ENCODE measurements at regions of chr5 and their contacts with region 1.

Region 1: DNA sequence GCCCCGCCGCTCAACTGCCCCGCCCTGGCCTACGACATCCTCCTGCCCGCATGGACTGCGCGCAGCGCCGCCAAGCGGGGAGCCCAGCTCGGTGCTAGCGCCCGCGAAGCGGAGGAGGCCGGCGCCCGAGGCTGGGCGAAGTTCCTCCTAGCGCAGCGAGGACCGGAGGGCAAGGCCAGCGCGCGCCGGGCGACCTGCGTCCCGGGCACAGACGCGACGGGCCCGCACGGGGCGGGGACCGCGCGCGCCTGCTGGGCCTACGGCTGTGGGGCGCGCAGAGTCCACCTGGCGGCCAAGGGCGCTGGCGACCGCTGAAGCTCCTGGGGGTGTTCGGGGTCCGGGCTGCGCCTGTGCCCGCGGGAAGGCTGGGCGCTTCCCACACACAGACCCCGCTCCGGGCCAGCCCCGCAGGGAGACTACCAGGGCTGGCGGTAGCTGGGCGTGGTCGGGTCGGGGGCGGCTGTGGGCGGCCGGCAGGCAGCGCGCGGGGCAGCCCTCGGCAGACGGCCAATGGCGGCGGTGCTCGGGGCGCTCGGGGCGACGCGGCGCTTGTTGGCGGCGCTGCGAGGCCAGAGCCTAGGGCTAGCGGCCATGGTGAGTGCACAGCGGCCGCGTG is at the start of gene PCBD2:
- DNase-seq: peak; percentile 90

Region 2: DNA sequence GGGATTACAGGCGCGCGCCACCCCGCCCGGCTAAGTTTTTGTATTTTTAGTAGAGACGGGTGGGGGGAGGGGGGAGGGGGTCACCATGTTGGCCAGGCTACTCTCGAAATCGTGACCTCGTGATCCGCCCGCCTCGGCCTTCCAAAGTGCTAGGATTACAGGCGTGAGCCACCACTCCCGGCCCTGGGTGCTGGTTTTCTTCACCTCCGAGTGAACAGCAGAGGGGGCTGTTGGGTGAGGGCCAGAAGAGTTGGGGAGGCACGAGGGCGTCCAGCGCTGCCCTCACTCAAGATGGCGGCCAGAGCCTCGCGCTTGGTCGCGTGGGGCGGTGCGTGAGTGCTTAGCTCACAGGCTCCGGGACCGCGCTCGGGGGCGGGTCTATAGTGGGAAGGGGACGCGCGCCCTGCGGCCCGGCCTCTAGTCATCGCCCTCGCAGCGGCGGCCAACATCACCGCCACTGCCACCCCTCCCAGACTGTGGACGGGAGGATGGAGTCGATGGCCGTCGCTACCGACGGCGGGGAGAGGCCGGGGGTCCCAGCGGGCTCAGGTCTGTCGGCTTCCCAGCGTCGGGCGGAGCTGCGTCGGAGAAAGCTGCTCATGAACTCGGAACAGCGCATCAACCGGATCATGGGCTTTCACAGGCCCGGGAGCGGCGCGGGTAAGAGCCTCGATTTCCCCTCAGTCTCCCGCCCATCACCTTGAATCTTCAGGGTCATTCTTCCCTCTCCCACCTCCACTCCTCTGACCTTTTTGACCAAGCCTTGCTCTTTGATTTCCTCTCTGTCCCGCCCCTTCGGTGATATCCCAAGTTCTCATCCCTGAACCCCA is 166.4 kb before region 1 on chr5 and contains the start of gene CAMLG:
- CTCF ChIA-PET with region 1: interaction called, 3 read pairs
- POLR2A ChIA-PET with region 1: interaction called, 13 read pairs
- DNase-seq: peak; percentile 93

Region 3: DNA sequence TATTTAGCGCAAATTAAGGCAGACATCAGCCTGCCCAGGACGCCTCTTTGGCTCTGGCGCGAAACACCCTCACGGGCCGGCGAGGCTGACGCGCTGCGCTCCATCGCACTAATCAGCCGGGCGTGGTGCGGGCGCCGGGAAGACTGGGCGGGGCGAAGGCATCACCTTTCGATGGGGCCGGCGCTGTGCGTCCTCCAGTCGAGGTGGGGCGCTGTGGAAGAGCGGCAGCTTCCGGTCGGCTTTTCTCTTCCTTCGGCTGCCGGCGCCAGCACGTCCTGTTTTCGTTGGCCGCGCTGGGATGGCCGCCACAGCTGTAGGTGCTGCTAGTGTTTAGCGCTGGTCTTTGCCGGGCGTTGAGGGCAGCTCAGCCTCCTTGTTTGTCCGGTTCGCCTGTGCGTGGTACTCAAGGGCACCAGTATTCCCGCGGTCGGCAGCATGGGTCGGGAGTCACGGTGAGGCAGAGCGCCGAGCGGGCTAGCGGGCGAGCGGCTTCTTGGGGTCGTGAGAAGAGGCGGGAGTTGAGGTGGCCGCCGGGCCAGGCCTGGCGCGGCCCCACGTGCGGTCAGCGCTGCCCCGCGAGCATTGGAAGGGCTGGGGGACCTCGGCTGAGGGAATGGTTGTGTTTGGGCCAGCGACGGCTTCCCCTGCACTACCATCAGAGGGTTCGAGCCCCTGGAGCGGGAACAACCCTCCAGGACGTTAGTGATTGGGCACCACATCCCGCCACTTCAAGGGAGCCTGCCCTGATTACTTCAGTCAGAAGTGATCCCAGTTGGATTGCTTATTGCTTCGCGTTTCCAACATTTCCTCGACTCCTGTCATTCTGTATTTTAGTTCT is 146.0 kb before region 1 on chr5 and contains the start of gene DDX46:
- CTCF ChIA-PET with region 1: interaction called, 5 read pairs
- POLR2A ChIA-PET with region 1: interaction called, 11 read pairs
- DNase-seq: peak; percentile 96

Region 4: DNA sequence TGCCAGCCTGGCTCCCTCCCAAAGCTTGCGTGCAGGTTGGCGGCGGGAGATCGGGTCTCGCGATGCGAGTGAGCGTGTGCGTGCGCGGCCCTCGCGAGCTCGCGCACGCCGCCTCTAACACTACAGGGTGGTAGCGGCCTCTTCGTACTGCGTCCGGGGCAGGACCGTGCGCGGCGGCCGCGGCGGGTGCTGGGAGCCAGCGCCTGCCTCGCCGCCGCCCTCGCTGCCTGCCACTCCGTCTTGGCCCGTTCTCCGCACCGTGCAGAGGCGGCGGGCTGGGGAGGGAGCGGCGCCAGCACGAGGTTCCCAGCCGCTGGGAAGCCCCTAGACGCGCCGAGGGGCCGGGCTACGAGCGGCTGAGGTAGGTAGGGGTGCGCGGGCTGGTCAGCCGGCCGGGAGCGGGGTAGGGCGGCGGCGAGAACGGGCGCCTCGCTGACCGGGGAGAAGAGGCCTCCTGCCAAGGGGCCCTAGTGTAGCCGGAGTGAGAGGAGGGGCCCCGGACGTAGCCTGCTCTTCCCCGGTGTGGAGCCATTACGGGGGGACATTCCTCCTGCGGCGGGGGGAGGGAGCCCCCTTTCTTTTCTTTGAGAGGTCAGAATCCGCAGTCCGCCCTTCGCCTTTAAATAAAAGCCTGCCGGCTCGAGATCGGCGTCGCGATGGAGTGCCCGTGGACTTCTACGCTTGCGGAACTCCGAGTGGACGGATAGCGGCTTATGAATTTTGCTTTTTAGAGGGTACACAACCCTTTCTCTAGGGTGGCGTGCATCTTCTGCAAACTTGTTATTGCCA is 58.7 kb before region 1 on chr5 and contains the start of gene C5orf24:
- CTCF ChIA-PET with region 1: interaction called, 4 read pairs
- POLR2A ChIA-PET with region 1: interaction called, 18 read pairs
- DNase-seq: peak; percentile 91

Region 5: DNA sequence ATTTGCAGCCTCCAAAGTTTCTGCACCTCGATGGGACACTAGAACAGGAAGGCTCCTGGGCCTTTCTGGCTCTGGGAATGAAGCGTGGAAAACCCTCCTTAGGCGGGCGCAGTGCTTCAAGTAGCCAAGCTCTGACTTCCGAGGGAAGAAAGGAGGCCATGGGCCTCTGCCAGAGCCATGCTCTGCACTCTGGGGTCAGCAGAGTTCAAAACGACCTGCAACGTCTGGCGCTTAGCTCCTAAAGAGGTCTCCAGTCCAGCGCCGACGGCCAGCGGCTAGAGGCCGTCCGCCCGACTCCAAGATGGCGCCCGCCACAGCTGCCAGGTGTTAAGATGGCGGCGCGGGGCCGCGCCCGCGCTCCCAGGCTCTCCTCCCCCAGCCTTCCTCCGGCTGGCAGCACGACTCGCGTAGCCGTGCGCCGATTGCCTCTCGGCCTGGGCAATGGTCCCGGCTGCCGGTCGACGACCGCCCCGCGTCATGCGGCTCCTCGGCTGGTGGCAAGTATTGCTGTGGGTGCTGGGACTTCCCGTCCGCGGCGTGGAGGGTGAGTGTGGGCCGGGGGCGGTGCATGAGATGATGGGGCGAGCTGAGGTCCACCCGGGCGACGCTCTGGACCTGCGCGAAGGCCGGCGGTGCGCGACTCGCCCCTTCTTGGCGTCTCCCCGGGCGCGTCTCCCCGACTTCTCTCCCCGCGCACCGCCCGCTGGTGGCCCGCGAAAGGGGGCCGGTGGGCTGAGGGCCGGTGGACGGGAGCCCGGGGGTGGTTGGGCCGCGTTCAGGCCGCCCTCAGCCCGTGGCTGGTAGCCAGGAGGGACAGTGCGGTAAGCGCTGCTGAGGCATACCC is 30.5 kb before region 1 on chr5 and contains the start of gene TXNDC15:
- CTCF ChIA-PET with region 1: interaction called, 4 read pairs
- POLR2A ChIA-PET with region 1: interaction called, 28 read pairs
- DNase-seq: peak; percentile 87

Region 6: DNA sequence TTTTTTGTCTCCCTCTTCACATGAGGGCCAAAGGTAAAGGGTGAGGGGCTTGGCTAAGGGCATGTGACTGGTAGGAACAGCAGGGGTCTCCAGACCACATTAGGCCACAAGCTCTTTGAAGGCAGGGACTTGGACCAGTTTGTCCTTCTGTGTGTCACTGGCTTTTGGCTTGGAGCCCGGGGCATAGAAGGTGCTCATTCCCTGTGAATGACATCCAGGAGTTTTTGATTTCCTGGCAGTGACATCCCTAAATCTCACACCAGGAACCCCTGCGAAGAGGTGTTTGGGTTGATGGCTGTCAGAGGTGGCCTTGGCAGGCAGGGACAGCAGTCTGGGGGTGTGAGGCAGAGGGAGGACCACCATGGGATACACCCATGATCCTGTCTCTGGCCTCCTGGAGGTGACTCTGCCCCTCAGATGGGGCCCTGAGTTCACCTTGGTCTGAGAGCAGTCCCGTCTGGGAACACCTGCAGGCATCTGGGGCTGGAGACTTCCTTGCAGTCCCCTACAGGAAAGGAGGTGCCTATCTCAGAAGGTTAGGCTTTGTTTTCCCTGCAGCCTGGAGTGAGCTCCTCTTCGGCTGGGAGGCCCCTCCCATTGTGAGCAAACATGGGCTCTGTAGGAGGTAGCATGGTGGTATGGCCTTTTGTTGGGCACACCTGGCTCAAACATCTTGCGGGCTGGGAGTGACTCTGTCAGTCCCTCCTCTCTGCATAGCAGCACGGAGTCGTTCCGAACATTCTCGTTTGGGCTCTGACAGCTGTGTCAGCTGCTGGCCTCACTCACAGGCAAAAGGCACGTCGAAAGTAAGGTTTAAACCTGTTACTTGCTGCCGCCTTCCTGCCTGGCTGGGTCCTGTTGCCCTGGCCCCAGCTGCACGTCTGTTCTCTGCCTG is 167.9 kb after region 1 on chr5:
- CTCF ChIA-PET with region 1: no interaction called
- POLR2A ChIA-PET with region 1: no interaction called
- DNase-seq: no peak

Measured in HEK293T (cell line).